ENCODE measurements at regions of chr17 and their contacts with region 1.

Region 1: DNA sequence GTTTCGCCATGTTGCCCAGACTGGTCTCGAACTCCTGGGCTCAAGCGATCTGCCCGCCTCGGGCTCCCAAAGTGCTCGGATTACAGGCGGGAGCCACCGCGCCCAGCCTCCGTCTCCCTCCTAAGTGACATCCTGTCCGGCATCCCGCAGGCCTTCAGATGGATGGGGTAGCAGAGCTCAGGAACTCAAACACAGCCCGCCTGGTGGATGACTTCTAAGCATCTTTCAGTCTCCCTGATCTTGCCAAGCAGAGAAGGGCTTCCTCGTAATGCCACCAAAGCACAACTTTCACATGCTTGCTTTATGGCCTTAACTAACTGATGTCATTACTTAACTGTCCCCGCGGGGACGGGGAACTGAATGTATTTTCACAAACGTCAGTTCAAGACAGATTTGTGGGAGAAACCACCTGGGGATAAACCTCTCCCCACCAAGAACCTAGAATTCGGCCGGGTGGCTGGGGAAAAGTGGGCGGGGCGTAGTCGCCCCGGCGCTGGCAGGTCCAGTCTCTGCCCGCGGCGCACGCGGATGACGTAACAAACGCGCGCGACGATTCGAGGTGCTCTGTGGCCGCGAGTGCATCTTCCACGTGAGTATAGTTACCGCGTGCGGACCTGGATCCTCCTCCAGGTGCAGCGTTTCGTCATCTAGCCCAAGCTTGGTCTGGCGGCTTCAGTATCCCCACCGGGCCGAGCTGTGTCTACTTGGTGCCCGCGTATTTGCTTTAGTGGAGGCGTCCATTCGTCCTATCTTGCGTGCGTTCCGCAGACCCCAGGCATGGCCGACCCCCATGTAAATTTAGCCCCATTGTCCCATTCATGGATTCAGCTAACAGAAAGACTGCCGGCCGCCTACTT is at the start of gene PFAS:
- DNase-seq: peak; percentile 83 to 96
- H3K4me3 ChIP-seq: peak within 1 kb of the TSS; percentile 99
- H3K27ac ChIP-seq: peak within 1 kb of the TSS; percentile 93
- H3K4me1 ChIP-seq: peaks cover 8% of the 10 kb centered on the region; the same call in 1 of the 2 replicates
- H3K27me3 ChIP-seq: no peaks in the 10 kb centered on the region
- CTCF ChIP-seq: no peak
- total RNA-seq, gene PFAS: 54.5 and 68.2 TPM in 2 replicates

Region 2: DNA sequence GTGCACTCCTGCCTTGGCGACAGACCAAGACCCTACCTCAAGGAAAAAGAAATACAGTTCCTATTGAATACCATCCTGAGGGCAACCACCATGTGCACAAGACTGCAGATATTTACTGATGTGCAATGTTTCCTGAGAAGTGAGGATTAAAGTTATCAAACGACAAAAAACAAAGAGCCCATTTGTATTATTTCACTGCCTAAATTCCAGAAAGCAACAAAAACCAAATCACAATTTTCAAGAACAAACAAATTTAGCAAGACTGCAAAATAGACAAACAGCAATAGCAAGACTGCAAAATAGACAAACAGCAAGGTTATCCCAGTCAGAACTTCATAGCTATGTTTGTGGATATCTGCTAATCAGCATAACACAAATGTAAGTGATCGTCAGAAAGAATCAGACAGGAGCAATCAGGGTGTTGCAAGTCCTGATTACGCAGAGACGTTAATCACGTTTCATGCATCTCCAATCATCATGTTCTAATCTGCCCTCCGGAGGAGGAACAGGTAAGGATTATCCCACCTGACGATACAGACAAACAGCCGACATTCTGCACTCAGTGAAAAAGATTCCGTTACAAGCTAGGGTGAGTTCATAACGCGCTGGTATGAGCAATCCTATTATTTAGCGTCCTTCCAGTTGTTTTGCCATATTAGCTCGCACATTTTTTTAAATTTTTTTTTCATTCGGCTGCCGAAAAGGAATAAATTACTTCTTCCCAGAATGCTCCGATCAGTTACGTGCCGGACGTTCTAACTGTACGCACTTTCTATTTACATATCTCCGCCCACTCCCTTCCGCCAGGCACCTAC is 75.7 kb before region 1 on chr17:
- CTCF ChIA-PET with region 1: no interaction called
- POLR2A ChIA-PET with region 1: interaction called, 16 read pairs
- intact Hi-C with region 1: no loop called
- DNase-seq: peak; percentile 79 to 96
- H3K4me3 ChIP-seq: peak overlapping the region; percentile 63
- H3K27ac ChIP-seq: peak overlapping the region; percentile 93
- H3K4me1 ChIP-seq: 0 out of 2 replicates have a peak, but pooled peaks cover 7% of the 10 kb centered on the region
- H3K27me3 ChIP-seq: no peaks in the 10 kb centered on the region
- CTCF ChIP-seq: no peak

Region 3: DNA sequence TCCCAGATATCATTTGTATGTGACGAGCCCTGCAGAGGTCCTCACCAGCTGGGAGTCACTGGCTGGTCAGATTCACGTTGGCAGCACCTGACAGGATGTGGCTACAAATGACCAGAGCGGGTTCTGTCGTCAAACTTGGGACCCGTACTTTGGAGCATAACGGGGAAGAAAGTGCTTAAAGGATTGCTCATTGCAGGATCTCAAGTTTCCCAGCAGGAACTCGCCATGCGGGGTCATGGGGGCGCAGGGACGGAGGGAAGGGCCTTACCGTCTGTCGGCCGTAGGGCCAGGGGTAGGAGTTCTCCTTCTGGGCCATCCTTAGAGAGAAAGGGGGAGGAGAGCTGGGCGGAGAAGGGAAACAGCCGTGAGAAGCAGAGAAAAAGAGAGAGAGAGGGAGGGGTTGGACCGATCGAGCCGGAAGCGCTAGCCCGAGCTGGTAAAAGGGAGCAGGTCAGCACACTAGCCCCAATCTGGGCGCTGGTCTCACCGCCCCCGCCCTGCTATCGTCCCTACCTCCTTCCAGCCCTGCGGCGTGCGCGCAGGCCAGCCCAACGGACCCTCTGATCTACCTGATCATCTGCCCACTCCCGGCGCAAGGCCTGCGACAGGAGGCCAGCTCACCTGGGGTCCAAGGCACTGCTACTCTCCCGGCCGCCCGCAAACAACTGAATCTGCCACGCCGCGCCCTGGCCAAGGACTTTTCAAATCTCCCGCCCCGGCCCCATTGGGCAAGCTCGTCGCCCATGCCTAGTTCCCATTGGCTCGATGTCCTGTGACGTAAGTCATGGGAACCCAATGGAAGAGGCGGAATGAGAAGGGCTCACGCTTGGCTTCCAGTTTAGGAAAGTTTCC is 38.8 kb before region 1 on chr17 and contains the start of gene AURKB:
- CTCF ChIA-PET with region 1: no interaction called
- POLR2A ChIA-PET with region 1: interaction called, 28 read pairs
- intact Hi-C with region 1: no loop called
- DNase-seq: peak; percentile 84 to 96
- H3K4me3 ChIP-seq: peak within 1 kb of the TSS; percentile 70
- H3K27ac ChIP-seq: peak within 1 kb of the TSS; percentile 55
- H3K4me1 ChIP-seq: peaks cover 12% of the 10 kb centered on the region
- H3K27me3 ChIP-seq: no peaks in the 10 kb centered on the region
- CTCF ChIP-seq: no peak
- total RNA-seq, gene AURKB: 159 and 167 TPM in 2 replicates

Region 4: GRCh38 chr17:8275421-8276290 is 26.7 kb after region 1 on chr17:
- CTCF ChIA-PET with region 1: no interaction called
- POLR2A ChIA-PET with region 1: interaction called, 10 read pairs
- intact Hi-C with region 1: no loop called
- DNase-seq: no peak
- H3K4me3 ChIP-seq: no peak overlapping the region
- H3K27ac ChIP-seq: no peak overlapping the region
- H3K4me1 ChIP-seq: no peaks in the 10 kb centered on the region
- H3K27me3 ChIP-seq: no peaks in the 10 kb centered on the region
- CTCF ChIP-seq: no peak

Region 5: GRCh38 chr17:8294814-8295316 is 45.9 kb after region 1 on chr17:
- CTCF ChIA-PET with region 1: interaction called, 6 read pairs
- POLR2A ChIA-PET with region 1: interaction called, 13 read pairs
- intact Hi-C with region 1: loop called (anchors 2 kb)
- DNase-seq: no peak
- H3K4me3 ChIP-seq: peak overlapping the region; percentile 66; the same call in 1 of the 2 replicates
- H3K27ac ChIP-seq: no peak overlapping the region
- H3K4me1 ChIP-seq: no peaks in the 10 kb centered on the region; the same call in 1 of the 2 replicates
- H3K27me3 ChIP-seq: no peaks in the 10 kb centered on the region
- CTCF ChIP-seq: no peak

Region 6: GRCh38 chr17:8552577-8553320 is 303.8 kb after region 1 on chr17:
- CTCF ChIA-PET with region 1: no interaction called
- POLR2A ChIA-PET with region 1: interaction called, 14 read pairs
- intact Hi-C with region 1: no loop called
- DNase-seq: no peak
- H3K4me3 ChIP-seq: no peak overlapping the region
- H3K27ac ChIP-seq: no peak overlapping the region
- H3K4me1 ChIP-seq: no peaks in the 10 kb centered on the region
- H3K27me3 ChIP-seq: peaks cover 19% of the 10 kb centered on the region
- CTCF ChIP-seq: no peak